ENCODE measurements at regions of chr1 and their contacts with region 1.

Region 1: GRCh38 chr1:22105611-22106207 is 37.2 kb downstream of the WNT4 start:
- DNase-seq: no peak
- ATAC-seq: no peak

Region 2: DNA sequence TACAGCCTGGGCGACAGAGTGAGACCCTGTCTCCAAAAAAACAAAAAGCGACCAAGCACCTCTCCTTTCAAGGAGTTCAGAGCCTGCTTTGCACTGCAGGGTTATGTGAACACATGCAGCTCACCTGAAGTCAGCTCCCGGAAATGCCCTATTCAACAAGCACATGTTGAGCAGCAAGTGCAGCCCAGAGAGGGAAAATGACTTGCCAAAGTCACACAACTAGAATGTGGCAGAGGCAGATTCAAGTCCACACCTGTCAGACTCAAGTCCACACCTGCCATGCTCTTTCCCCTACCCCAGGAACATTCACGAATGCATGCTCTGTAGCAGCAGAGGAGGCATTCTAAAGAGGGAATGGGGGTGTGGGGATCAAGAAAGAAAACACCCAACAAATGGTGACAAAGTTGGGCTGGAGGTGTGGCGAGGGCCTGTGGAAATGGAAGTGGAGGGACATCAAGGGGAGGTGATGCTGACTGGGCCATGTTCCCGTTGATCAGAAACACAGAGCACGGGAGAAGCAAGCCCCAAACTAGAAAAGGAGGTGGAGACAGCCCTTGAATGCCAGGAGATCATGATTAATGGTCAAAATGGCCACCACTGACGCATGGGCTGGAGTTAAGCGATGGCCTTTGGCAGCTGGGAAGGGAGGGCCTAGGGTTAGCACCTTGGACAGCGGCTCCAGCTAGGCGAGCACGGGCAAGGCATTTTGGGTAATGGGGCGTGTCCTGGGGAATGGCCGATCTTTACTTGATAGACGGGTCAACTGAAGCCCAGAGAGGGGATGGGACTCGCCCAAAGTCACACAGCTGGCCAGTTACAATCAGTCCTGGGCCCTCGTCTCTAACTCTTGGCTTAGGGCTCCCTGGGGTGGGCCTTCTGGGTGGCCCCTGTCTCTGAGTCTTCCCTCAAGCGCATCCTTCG is 458.0 kb before region 1 on chr1:
- intact Hi-C with region 1: no loop called
- DNase-seq: no peak
- ATAC-seq: no peak

Region 3: GRCh38 chr1:22275721-22276395 is 170.1 kb after region 1 on chr1:
- intact Hi-C with region 1: loop called (anchors 5 kb)
- DNase-seq: no peak
- ATAC-seq: peak; percentile 60

Region 4: DNA sequence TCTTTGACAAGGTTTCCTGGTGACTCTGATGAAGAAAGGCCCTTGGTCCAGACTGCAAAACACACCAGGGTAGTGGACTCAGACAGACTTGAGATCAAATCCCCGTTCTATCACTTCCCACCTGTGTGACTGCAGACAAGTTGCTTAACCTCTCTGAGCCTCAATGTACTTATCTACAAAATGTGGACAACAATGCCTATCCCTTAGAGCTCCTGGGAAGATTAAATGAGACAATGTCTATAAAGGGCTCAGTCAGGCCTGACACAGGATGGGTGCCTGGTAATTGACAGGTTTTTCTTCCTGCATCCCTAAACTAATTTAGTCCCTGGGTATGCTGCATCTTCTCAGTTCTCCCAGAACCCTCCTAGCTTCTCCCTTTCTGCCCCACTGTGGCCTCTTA is 308.1 kb after region 1 on chr1:
- intact Hi-C with region 1: loop called (anchors 2 kb)
- DNase-seq: no peak
- ATAC-seq: no peak

Measured in Right ventricle myocardium inferior (tissue), 1 donor.